ENCODE measurements at regions of chr3 and their contacts with region 1.

Region 1: DNA sequence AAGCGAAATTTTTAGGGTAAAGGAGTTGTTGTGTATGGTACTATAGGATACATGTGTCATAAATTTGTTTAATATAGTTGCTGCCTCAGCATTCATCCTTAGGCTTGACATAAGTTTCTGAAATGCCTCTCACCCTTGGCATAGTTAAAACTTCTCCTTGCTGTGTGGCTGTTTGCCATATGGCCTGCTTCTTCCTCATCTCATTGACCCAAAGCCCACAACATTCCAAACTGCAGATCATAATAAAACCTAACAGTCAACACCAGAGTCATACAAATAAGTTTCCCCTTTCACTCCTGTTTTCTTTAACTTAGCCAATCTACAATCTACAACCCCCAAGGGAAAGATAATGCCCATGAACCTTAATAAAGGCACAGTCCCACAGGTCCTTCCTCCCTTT is 136.6 kb downstream of the TMCC1 start:
- DNase-seq: no peak
- H3K4me3 ChIP-seq: no peak overlapping the region
- H3K27ac ChIP-seq: no peak overlapping the region
- H3K4me1 ChIP-seq: peaks cover 6% of the 10 kb centered on the region
- H3K27me3 ChIP-seq: no peaks in the 10 kb centered on the region
- CTCF ChIP-seq: no peak

Region 2: DNA sequence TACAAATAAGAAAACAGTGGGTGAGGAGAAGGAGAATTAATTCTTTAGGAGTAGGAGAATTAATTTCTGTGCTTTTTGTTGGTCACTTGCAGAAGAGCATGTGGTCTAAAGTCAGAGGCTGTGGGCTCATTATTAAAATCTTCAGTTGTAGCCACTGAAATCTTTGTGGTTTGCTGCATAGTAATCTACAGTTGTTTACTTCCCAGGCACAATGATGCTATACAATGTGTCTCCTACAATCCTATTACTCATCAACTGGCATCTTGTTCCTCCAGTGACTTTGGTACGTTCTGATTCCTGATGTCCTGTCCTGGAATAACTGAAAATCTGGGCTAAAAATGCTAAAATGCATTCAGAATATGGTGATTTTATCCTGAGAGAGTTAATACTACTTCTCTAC is 295.8 kb before region 1 on chr3:
- intact Hi-C with region 1: no loop called
- DNase-seq: no peak
- H3K4me3 ChIP-seq: no peak overlapping the region
- H3K27ac ChIP-seq: peak overlapping the region; percentile 89
- H3K4me1 ChIP-seq: peaks cover 27% of the 10 kb centered on the region
- H3K27me3 ChIP-seq: no peaks in the 10 kb centered on the region
- CTCF ChIP-seq: no peak

Region 3: GRCh38 chr3:129474984-129475804 is 281.7 kb before region 1 on chr3:
- intact Hi-C with region 1: no loop called
- DNase-seq: no peak
- H3K4me3 ChIP-seq: no peak overlapping the region
- H3K27ac ChIP-seq: no peak overlapping the region
- H3K4me1 ChIP-seq: no peaks in the 10 kb centered on the region
- H3K27me3 ChIP-seq: no peaks in the 10 kb centered on the region
- CTCF ChIP-seq: no peak

Region 4: GRCh38 chr3:129812589-129812988 is 55.7 kb after region 1 on chr3:
- intact Hi-C with region 1: loop called (anchors 10 kb)
- DNase-seq: no peak
- H3K4me3 ChIP-seq: no peak overlapping the region
- H3K27ac ChIP-seq: no peak overlapping the region
- H3K4me1 ChIP-seq: peaks cover 6% of the 10 kb centered on the region
- H3K27me3 ChIP-seq: no peaks in the 10 kb centered on the region
- CTCF ChIP-seq: no peak